ENCODE measurements at regions of chr1 and their contacts with region 1.

Region 1: GRCh38 chr1:11176081-11176706 is 13.0 kb upstream of the ANGPTL7 start:
- DNase-seq: no peak
- H3K4me3 ChIP-seq: no peak overlapping the region
- H3K27ac ChIP-seq: no peak overlapping the region
- H3K4me1 ChIP-seq: peaks cover 20% of the 10 kb centered on the region
- H3K27me3 ChIP-seq: no peaks in the 10 kb centered on the region
- CTCF ChIP-seq: no peak

Region 2: DNA sequence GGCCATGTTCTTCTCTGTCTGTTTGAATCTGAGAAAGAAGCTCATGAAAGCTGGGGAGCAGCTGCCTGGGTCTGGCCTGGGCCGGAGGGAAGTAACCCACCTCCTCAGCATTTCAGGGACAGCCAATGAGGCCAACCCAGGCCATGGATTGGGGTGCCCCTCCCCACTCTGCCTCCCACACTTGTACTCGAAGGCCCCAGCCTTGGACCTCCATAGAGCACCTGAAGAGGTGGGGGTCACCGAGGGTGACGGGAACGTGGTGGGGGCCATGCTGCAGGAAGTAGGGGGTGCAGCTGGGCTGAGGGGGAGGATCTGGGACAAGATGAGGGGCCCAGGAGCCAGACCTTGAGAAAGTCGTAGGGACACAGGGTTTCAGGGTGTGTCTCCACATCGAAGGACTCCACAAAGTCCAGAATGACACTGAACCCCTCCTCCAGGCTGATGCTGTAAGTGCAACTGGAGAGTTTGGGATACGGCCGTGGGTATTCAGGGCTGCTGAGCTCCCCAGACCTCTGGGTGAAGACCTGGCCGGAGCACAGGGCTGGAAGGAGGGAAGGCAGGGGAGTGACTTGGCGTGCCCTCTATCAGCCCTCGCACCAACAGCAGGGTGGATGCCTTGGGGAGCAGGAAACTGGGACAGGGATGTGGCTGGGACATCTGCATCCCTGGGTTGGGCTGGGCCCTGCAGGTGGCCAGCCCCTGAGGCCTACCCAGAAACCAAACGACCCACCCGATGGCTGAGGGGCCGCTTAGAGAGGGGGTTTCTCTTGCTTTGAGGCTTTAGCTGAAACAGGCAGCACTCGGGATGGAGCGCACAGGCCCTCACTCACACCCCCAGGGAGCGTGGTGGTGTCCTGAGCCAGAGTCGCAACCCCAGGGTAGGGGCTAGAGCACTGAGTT is 132.9 kb before region 1 on chr1:
- CTCF ChIA-PET with region 1: interaction called, 16 read pairs
- POLR2A ChIA-PET with region 1: no interaction called
- intact Hi-C with region 1: no loop called
- DNase-seq: no peak
- H3K4me3 ChIP-seq: no peak overlapping the region
- H3K27ac ChIP-seq: no peak overlapping the region
- H3K4me1 ChIP-seq: no peaks in the 10 kb centered on the region
- H3K27me3 ChIP-seq: no peaks in the 10 kb centered on the region
- CTCF ChIP-seq: no peak

Region 3: DNA sequence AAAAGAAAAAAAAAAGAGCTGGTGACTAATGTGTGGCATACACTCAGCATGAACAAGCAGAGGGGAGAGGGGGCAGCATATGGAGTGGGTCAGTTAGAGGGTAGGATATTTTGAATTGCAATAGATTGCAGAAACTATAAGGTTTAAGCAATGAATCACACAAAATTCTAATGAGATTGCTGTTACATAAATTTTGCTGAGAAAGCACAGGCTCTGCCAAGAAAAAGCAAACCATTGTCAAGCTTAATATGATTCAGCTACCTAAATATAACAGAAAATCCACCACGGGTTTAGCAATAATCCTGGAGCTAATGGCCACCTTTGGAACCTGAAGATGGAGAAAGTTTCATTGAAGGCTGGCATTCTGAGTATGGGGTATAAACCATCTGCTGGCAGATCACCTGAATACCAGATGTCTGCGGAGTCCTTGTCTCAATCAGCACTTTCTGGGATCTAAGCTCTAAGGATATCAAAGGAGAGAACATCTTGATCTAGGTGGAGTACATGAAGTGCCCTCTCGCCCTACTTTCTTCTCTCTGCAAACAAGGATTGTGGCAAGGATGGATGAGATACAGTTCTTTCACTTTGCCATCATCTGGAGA is 17.4 kb before region 1 on chr1:
- CTCF ChIA-PET with region 1: no interaction called
- POLR2A ChIA-PET with region 1: no interaction called
- intact Hi-C with region 1: no loop called
- DNase-seq: peak in 1 of 2 experiments; percentile 81
- H3K4me3 ChIP-seq: no peak overlapping the region
- H3K27ac ChIP-seq: peak overlapping the region; percentile 76
- H3K4me1 ChIP-seq: peaks cover 13% of the 10 kb centered on the region
- H3K27me3 ChIP-seq: no peaks in the 10 kb centered on the region
- CTCF ChIP-seq: no peak

Region 4: GRCh38 chr1:11501558-11501897 is 325.3 kb after region 1 on chr1:
- CTCF ChIA-PET with region 1: interaction called, 13 read pairs
- POLR2A ChIA-PET with region 1: no interaction called
- intact Hi-C with region 1: no loop called
- DNase-seq: no peak
- H3K4me3 ChIP-seq: no peak overlapping the region
- H3K27ac ChIP-seq: no peak overlapping the region
- H3K4me1 ChIP-seq: no peaks in the 10 kb centered on the region
- H3K27me3 ChIP-seq: peaks cover 37% of the 10 kb centered on the region
- CTCF ChIP-seq: no peak

Measured in PC-9 (cell line).